ENCODE measurements at regions of chr6 and their contacts with region 1.

Region 1: DNA sequence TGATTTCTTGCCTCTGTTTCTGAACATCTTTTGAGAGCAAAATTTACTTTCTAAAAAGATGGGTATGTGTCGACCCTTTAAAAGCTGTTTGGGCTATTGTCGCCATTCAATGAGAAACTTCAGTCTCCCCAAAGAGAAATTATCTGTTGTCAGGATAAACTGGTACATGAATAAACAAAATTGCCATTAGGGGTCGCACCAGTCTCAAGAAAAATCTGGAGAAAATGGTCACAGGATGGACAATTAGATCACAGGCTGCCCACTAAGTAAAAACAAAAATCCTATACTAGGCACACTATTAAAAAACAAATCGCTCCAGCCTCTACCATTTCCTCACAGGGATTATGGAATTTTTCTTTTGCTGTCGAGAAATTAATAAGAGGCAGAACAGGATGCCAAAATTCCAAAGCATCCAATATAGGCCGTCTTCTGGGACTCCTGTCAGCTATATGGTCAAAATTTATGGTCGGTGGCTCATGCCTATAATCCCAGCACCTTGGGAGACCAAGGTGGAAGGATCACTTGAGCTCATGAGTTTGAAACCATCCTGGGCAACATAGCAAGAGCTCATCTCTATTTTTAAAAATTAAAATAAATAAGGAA is 5.5 kb upstream of the HLA-E start:
- DNase-seq: peak in 1 of 2 donors; percentile 68
- ATAC-seq: peak in 6 of 8 donors; percentile 37 to 67 (median 47)
- H3K4me3 ChIP-seq: no peak overlapping the region
- H3K27ac ChIP-seq: peak overlapping the region in 1 of 10 donors; percentile 26
- H3K4me1 ChIP-seq: peaks cover 0 to 28% (median 5%) of the 10 kb centered on the region in 9 donors
- H3K27me3 ChIP-seq: peaks cover 10 to 43% (median 39%) of the 10 kb centered on the region in 7 donors
- CTCF ChIP-seq: peak in 8 of 9 donors; percentile 37 to 73 (median 65)

Region 2: GRCh38 chr6:30533460-30534294 is 49.9 kb after region 1 on chr6:
- intact Hi-C with region 1: loop called in 5 of 10 experiments (anchors 2 to 5 kb)
- DNase-seq: no peak
- ATAC-seq: peak in 2 of 8 donors; percentile 20 to 26
- H3K4me3 ChIP-seq: no peak overlapping the region
- H3K27ac ChIP-seq: peak overlapping the region in 7 of 10 donors; percentile 9 to 80 (median 71)
- H3K4me1 ChIP-seq: peaks cover 0 to 30% (median 9%) of the 10 kb centered on the region in 9 donors
- H3K27me3 ChIP-seq: no peaks in the 10 kb centered on the region
- CTCF ChIP-seq: no peak

Region 3: GRCh38 chr6:30547454-30547853 is 63.7 kb after region 1 on chr6:
- intact Hi-C with region 1: loop called in 5 of 10 experiments (anchors 1 to 5 kb)
- DNase-seq: no peak
- ATAC-seq: no peak
- H3K4me3 ChIP-seq: no peak overlapping the region
- H3K27ac ChIP-seq: no peak overlapping the region
- H3K4me1 ChIP-seq: peaks cover 0 to 17% (median 11%) of the 10 kb centered on the region in 9 donors
- H3K27me3 ChIP-seq: peaks cover 0 to under 1% (median 0%) of the 10 kb centered on the region in 7 donors
- CTCF ChIP-seq: no peak

Region 4: GRCh38 chr6:30600451-30600961 is 116.7 kb after region 1 on chr6:
- intact Hi-C with region 1: loop called in 8 of 10 experiments (anchors 2 to 10 kb)
- DNase-seq: peak; percentile 33 to 43
- ATAC-seq: peak in 2 of 8 donors; percentile 10 to 11
- H3K4me3 ChIP-seq: no peak overlapping the region
- H3K27ac ChIP-seq: no peak overlapping the region
- H3K4me1 ChIP-seq: peaks cover 0 to 15% (median 0%) of the 10 kb centered on the region in 9 donors
- H3K27me3 ChIP-seq: no peaks in the 10 kb centered on the region
- CTCF ChIP-seq: no peak

Region 5: DNA sequence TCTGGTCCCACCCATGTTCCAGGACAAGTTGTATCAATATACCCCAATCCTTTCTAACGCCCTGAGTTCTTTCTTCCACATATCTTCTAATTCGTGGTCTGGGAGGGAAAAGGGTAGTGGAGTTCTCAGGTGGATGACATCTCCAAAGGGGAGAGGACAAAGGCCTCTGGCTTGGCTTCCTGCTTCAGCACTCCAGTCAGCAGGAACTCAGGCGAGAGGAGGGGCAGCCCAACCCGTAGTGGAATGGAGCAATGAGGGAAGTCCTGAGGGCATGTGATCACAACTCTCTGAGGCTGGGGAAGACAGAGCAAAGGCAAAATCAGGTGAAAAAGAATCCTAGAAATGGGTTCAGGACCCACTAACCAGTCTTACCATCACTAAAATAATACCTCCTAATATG is 216.6 kb after region 1 on chr6:
- intact Hi-C with region 1: no loop called
- DNase-seq: no peak
- ATAC-seq: peak; percentile 59 to 92 (median 75)
- H3K4me3 ChIP-seq: no peak overlapping the region
- H3K27ac ChIP-seq: peak overlapping the region in 2 of 10 donors; percentile 3 to 16
- H3K4me1 ChIP-seq: peaks cover 0 to 14% (median 0%) of the 10 kb centered on the region in 9 donors
- H3K27me3 ChIP-seq: no peaks in the 10 kb centered on the region
- CTCF ChIP-seq: no peak

Region 6: DNA sequence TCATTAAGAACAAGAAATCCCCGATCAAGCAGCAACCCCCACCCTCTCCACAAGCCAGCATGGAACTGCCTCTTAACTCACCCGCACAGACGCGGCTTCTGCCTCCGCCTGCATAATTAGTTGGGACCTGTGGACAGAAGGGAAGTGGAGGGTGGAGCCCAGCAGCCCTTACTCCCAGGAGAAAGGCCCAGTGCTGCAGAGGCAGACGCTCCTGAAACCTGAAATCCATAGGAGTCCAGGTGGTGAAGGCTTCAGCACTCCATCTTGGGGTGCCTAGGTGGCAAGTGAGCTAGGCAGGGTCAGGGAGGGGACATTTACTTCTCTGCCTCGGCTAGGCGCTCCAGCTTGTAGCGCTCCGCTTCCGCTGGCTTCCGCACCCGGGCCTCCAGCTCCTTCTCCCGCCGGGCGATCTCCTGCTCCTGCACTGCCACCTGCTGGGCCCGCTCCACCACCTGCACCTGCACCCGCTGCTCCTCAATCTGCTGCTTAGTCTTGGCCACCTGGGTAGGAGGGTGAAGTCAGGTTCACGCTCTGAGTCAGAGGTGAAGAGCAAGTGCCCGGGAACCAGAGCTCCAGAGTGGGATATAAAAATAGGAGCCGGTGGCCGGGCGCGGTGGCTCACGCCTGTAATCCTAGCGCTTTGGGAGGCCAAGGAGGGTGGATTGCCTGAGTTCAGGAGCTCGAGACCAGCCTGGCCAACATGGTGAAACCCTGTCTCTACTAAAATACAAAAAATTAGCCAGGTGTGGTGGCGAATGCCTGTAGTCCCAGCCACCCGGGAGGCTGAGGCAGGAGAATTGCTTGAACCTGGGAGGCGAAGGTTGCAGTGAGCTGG is 247.0 kb after region 1 on chr6:
- intact Hi-C with region 1: loop called in 2 of 10 experiments (anchors 5 to 10 kb)
- DNase-seq: peak; percentile 70 to 71
- ATAC-seq: peak; percentile 56 to 83 (median 81)
- H3K4me3 ChIP-seq: no peak overlapping the region
- H3K27ac ChIP-seq: peak overlapping the region in 5 of 10 donors; percentile 7 to 64 (median 10)
- H3K4me1 ChIP-seq: peaks cover 6 to 27% (median 16%) of the 10 kb centered on the region in 9 donors
- H3K27me3 ChIP-seq: no peaks in the 10 kb centered on the region
- CTCF ChIP-seq: peak; percentile 41 to 72 (median 63)